ENCODE measurements at regions of chr11 and their contacts with region 1.

Region 1: DNA sequence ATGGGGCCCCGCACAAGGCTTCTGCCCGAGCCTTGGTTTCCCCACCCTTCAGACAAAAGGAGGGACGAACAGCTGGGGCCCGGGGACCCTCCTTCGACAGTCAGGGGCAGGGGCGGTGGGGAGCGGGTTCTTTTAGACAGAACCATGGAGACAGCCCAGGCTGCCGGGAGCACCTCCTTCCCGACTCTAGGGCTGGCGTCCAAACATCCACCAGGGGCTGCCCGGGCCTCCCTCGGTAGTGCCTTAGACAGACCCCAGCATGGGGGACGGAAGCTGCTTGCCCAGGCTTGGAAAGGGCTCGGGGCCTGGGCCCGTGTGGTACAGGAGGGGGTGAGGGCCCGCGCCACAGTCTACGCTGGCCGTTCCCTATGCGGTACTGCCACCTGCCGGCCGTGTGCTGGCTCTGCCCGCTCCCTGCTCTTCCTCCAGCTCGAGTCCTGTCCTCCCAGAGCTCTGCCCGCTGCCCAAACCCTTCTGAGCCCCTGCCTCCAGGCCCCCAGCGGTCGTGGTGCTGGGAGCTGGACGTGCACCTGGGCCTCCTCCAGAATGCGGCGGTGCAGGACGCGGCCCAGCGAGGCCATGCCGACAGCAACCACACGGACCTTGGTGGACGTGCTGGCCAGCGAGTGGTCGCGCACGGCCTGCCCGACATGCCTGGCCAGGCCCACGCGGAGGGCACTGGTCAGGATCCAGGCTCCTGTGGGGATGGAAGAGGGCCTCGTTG is 20.1 kb downstream of the TSSC4 start:
- DNase-seq: peak; percentile 64
- H3K4me3 Mint-ChIP-seq: no peak overlapping the region
- H3K27ac Mint-ChIP-seq: no peak overlapping the region
- H3K4me1 Mint-ChIP-seq: no peaks in the 10 kb centered on the region
- H3K27me3 Mint-ChIP-seq: no peaks in the 10 kb centered on the region
- CTCF ChIP-seq: peak; percentile 93

Region 2: DNA sequence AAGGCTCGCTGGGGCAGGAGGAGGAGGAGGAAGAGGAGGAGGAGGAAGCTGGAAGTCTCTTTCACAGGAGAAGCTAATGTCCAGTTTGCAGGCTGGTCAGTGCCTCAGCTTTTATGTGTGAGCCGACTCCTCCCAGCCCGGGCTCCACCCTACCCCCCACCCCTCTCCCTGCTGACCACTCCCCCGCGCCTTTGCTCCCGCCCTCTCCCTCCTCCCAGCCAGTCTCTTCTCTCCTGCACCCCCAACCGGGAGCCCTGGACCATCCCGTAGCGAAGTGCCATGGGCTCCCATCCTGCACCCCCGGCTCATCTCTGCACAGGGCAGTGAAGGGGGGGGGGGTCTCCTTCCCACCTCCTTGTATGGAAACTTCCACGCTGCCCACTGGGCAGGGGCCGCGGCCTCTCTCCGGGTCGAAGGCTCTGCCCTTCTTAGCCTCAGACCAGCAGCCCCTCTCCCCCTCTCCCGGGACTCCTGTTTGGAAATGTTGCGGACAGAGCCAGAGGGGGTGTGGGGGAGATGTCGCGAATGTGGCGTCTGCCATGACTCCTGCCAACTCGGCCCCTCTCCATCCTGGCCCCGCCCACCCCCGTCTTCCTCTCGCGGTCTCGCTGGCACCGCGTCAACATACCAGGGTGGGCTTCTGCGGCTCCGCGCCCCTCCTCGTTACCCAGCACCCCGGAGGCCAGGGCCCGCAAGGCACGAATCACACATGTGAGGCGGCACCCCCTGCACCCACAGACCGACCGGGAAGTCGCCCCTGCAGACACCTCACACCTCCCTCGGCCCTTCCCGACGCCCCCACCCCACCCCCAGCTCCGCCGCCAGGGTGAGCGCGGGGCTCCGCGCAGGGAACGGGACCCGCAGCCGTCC is 283.2 kb before region 1 on chr11:
- CTCF ChIA-PET with region 1: no interaction called
- POLR2A ChIA-PET with region 1: no interaction called
- intact Hi-C with region 1: no loop called
- DNase-seq: peak; percentile 19
- H3K4me3 Mint-ChIP-seq: peak overlapping the region; percentile 29
- H3K27ac Mint-ChIP-seq: no peak overlapping the region
- H3K4me1 Mint-ChIP-seq: peaks cover 5% of the 10 kb centered on the region
- H3K27me3 Mint-ChIP-seq: peaks cover 70% of the 10 kb centered on the region
- CTCF ChIP-seq: no peak

Region 3: GRCh38 chr11:2166091-2166851 is 254.4 kb before region 1 on chr11:
- CTCF ChIA-PET with region 1: interaction called, 6 read pairs
- POLR2A ChIA-PET with region 1: no interaction called
- intact Hi-C with region 1: loop called (anchors 1 kb)
- DNase-seq: peak; percentile 35
- H3K4me3 Mint-ChIP-seq: no peak overlapping the region
- H3K27ac Mint-ChIP-seq: no peak overlapping the region
- H3K4me1 Mint-ChIP-seq: no peaks in the 10 kb centered on the region
- H3K27me3 Mint-ChIP-seq: no peaks in the 10 kb centered on the region
- CTCF ChIP-seq: peak; percentile 69

Region 4: DNA sequence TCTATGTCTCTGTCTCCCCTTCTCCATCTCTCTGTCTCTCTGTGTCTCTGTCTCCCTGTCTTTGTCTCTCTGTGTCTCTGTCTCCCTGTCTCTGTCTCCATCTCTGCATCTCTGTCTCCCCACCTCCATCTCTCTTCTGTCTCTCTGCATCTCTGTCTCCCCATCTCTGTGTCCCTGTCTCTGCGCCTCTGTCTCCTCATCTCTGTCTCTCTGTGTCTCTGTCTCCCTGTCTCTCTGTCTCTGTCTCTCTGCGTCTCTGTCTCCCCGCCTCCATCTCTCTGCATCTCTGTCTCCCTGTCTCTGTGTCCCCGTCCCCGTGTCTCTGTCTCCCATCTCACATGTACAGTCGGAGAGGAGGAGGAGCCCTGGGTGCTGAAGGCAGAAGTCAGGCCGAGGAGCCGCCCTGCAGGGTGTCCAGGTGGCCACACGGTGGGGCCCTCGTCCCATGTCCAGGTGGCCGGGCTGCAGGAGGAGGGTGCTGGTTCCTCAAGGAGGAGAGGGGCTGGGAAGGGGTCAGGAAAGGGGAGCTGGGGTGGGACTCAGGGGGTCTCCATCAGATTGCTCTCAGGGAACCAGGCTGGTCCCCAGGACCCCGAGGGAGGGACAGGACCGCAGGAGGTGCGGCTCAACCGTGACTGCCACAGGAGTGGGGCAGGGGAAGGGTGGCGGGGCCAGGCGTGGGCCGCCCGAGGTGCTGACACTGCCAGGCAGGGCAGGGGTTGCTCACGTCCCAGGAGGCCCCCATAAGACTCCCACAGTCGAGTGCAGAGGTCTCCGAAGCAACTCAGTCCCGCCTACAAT is 223.5 kb before region 1 on chr11:
- CTCF ChIA-PET with region 1: interaction called, 34 read pairs
- POLR2A ChIA-PET with region 1: no interaction called
- intact Hi-C with region 1: loop called (anchors 1 kb)
- DNase-seq: peak; percentile 70
- H3K4me3 Mint-ChIP-seq: no peak overlapping the region
- H3K27ac Mint-ChIP-seq: no peak overlapping the region
- H3K4me1 Mint-ChIP-seq: peaks cover 26% of the 10 kb centered on the region
- H3K27me3 Mint-ChIP-seq: peaks cover 21% of the 10 kb centered on the region
- CTCF ChIP-seq: peak; percentile 94

Region 5: DNA sequence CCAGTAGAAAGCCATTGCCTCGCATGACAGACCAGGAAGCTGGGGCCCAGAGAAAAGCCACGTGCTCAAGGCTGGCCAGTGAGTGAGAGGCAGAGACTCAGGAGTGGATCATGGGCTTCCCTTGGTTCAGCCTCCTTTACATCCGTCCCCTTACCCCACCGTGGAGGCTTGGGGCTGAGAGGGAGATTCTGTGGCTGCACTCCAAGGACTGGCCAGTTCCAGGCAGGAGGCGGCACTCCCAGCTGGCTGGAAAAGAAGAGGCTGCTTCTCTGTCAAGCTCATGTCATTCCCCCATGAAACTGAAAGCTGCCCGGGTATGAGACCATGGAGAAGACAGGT is 143.7 kb before region 1 on chr11:
- CTCF ChIA-PET with region 1: interaction called, 16 read pairs
- POLR2A ChIA-PET with region 1: no interaction called
- intact Hi-C with region 1: no loop called
- DNase-seq: no peak
- H3K4me3 Mint-ChIP-seq: no peak overlapping the region
- H3K27ac Mint-ChIP-seq: no peak overlapping the region
- H3K4me1 Mint-ChIP-seq: no peaks in the 10 kb centered on the region
- H3K27me3 Mint-ChIP-seq: peaks cover 55% of the 10 kb centered on the region
- CTCF ChIP-seq: no peak

Region 6: GRCh38 chr11:2314525-2315394 is 105.9 kb before region 1 on chr11:
- CTCF ChIA-PET with region 1: interaction called, 46 read pairs
- POLR2A ChIA-PET with region 1: no interaction called
- intact Hi-C with region 1: no loop called
- DNase-seq: no peak
- H3K4me3 Mint-ChIP-seq: no peak overlapping the region
- H3K27ac Mint-ChIP-seq: no peak overlapping the region
- H3K4me1 Mint-ChIP-seq: no peaks in the 10 kb centered on the region
- H3K27me3 Mint-ChIP-seq: no peaks in the 10 kb centered on the region
- CTCF ChIP-seq: no peak

Region 7: GRCh38 chr11:2351701-2352100 is 69.0 kb before region 1 on chr11:
- CTCF ChIA-PET with region 1: no interaction called
- POLR2A ChIA-PET with region 1: no interaction called
- intact Hi-C with region 1: no loop called
- DNase-seq: no peak
- H3K4me3 Mint-ChIP-seq: no peak overlapping the region
- H3K27ac Mint-ChIP-seq: no peak overlapping the region
- H3K4me1 Mint-ChIP-seq: peaks cover 7% of the 10 kb centered on the region
- H3K27me3 Mint-ChIP-seq: no peaks in the 10 kb centered on the region
- CTCF ChIP-seq: no peak

Region 8: GRCh38 chr11:2442589-2442988 is 21.9 kb after region 1 on chr11:
- CTCF ChIA-PET with region 1: interaction called, 13 read pairs
- POLR2A ChIA-PET with region 1: no interaction called
- intact Hi-C with region 1: no loop called
- DNase-seq: no peak
- H3K4me3 Mint-ChIP-seq: no peak overlapping the region
- H3K27ac Mint-ChIP-seq: no peak overlapping the region
- H3K4me1 Mint-ChIP-seq: no peaks in the 10 kb centered on the region
- H3K27me3 Mint-ChIP-seq: peaks cover 26% of the 10 kb centered on the region
- CTCF ChIP-seq: no peak

Region 9: GRCh38 chr11:2630679-2631078 is 210.0 kb after region 1 on chr11:
- CTCF ChIA-PET with region 1: no interaction called
- POLR2A ChIA-PET with region 1: no interaction called
- intact Hi-C with region 1: no loop called
- DNase-seq: no peak
- H3K4me3 Mint-ChIP-seq: no peak overlapping the region
- H3K27ac Mint-ChIP-seq: no peak overlapping the region
- H3K4me1 Mint-ChIP-seq: no peaks in the 10 kb centered on the region
- H3K27me3 Mint-ChIP-seq: peaks cover 67% of the 10 kb centered on the region
- CTCF ChIP-seq: no peak